ENCODE measurements at regions of chr13 and their contacts with region 1.

Region 1: GRCh38 chr13:41502673-41503072 is 45.3 kb downstream of the RGCC start:
- DNase-seq: peak; percentile 35 to 47 (median 40)
- H3K4me3 ChIP-seq: no peak overlapping the region
- H3K4me3 Mint-ChIP-seq: peak overlapping the region in 6 of 8 donors; percentile 12 to 59 (median 45)
- H3K27ac ChIP-seq: no peak overlapping the region
- H3K27ac Mint-ChIP-seq: peak overlapping the region; percentile 10 to 88 (median 77)
- H3K4me1 ChIP-seq: peaks cover 50% of the 10 kb centered on the region
- H3K4me1 Mint-ChIP-seq: peaks cover 32 to 53% (median 49%) of the 10 kb centered on the region in 4 donors
- H3K27me3 ChIP-seq: no peaks in the 10 kb centered on the region
- H3K27me3 Mint-ChIP-seq: no peaks in the 10 kb centered on the region

Region 2: DNA sequence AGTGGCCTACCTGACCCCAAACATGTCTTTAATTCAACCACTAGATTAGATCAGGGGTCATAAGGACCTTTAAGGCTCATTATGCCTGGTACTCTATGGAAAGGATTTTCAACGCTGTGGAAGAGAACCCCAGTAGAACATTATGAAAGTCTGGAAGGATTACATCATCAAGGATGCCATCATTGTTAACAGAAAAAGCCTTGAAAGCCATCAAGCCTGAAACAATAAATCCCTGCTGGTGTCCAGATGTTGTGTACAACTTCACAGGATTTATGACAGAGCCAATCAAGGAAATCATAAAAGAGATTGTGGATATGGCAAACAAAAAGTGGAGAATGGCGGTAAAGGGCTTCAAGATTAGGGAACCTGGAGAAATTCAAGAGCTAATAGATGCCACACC is 131.9 kb before region 1 on chr13:
- CTCF ChIA-PET with region 1: no interaction called
- POLR2A ChIA-PET with region 1: no interaction called
- intact Hi-C with region 1: no loop called
- DNase-seq: no peak
- H3K4me3 ChIP-seq: no peak overlapping the region
- H3K4me3 Mint-ChIP-seq: no peak overlapping the region
- H3K27ac ChIP-seq: no peak overlapping the region
- H3K27ac Mint-ChIP-seq: peak overlapping the region in 4 of 7 donors; percentile 51 to 76 (median 64)
- H3K4me1 ChIP-seq: no peaks in the 10 kb centered on the region
- H3K4me1 Mint-ChIP-seq: peaks cover 3 to 7% (median 6%) of the 10 kb centered on the region in 4 donors
- H3K27me3 ChIP-seq: no peaks in the 10 kb centered on the region
- H3K27me3 Mint-ChIP-seq: no peaks in the 10 kb centered on the region

Region 3: DNA sequence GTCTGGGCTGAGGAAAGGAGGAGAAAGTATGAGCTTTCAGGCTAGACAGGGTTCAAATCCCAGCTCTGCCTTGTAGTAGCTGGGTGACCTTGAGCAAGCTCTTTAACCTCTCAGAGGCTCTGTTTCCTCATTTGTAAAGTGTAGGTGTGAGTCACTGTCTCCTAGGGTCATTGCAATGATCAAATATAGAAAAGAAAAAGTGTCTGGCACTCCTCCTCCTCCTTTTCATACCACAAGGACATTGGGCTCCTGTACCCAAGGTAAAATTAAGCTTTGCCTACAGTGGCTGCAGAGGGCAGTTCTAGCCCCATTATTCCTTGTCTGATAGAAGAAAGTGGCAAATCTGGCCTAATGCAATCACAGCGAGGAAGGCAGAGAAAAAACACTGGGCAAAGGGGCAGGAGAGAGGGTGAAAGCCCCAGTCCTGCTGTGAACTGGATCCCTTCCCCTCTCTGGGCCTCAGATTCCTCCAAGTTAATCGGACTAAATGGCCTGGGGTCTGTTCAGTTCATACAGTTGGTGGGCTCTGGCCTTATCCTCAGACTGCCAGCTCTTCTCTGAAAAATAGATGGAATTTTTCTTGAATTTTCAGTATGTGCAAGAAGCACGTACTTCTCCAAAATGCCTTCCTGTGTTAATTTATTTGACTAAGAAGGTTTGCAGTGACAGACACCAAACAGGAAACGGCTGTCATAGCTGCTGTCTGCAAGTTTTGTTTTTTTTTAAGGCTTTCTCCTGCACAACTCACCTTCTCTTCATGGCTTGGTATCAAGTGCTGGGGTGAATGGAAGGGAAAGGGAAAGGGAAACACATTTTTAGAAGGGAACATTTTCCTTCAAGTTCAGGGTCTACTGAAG is 10.0 kb before region 1 on chr13:
- CTCF ChIA-PET with region 1: interaction called, 8 read pairs
- POLR2A ChIA-PET with region 1: interaction called, 34 read pairs
- intact Hi-C with region 1: loop called (anchors 1 kb)
- DNase-seq: peak; percentile 52 to 58 (median 57)
- H3K4me3 ChIP-seq: peak overlapping the region; percentile 1 to 56
- H3K4me3 Mint-ChIP-seq: peak overlapping the region; percentile 61 to 85 (median 74)
- H3K27ac ChIP-seq: peak overlapping the region; percentile 57
- H3K27ac Mint-ChIP-seq: peak overlapping the region; percentile 97 to 98 (median 97)
- H3K4me1 ChIP-seq: peaks cover 77% of the 10 kb centered on the region
- H3K4me1 Mint-ChIP-seq: peaks cover 39 to 68% (median 51%) of the 10 kb centered on the region in 4 donors
- H3K27me3 ChIP-seq: no peaks in the 10 kb centered on the region
- H3K27me3 Mint-ChIP-seq: no peaks in the 10 kb centered on the region